Calu3 (cell line): ENCODE measurements at regions of chr3 and their contacts with region 1.

Region 1: GRCh38 chr3:169846458-169847193 is 23.1 kb downstream of the LRRC31 start:
- DNase-seq: no peak
- H3K4me3 Mint-ChIP-seq: no peak overlapping the region
- H3K27ac Mint-ChIP-seq: no peak overlapping the region
- H3K4me1 Mint-ChIP-seq: no peaks in the 10 kb centered on the region
- H3K27me3 Mint-ChIP-seq: no peaks in the 10 kb centered on the region
- CTCF ChIP-seq: no peak

Region 2: GRCh38 chr3:169812332-169813235 is 34.0 kb before region 1 on chr3 and contains the starts of genes LRRC34 and LRRIQ4:
- CTCF ChIA-PET with region 1: no interaction called
- intact Hi-C with region 1: loop called (anchors 1 kb)
- DNase-seq: peak; percentile 63
- H3K4me3 Mint-ChIP-seq: peak within 1 kb of the TSS; percentile 63
- H3K27ac Mint-ChIP-seq: no peak within 1 kb of the TSS
- H3K4me1 Mint-ChIP-seq: no peaks in the 10 kb centered on the region
- H3K27me3 Mint-ChIP-seq: peaks cover 30% of the 10 kb centered on the region
- CTCF ChIP-seq: no peak
- total RNA-seq, gene LRRC34: not detected in 2 replicates
- total RNA-seq, gene LRRIQ4: 0.27 TPM in 1 of 2 replicates, not detected in the other

Region 3: DNA sequence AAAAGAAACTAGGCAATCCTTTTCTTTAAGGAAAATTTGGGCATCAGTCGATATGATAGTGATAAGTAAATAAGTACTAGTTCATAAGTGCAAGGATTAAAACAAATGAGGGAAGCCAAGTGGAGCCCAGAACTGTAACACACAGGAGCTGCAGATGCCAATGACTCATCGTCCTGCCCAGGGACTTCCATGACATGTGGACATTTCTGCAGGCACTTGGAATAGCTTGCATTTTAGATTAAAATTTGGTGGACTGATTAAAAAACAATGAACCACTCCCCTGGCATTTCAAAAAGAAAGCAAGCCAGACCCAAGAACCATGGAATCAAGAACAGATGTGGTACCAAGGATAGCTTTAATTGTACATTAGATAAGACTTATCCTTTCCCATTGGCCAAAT is 67.7 kb after region 1 on chr3:
- CTCF ChIA-PET with region 1: no interaction called
- intact Hi-C with region 1: no loop called
- DNase-seq: peak; percentile 35
- H3K4me3 Mint-ChIP-seq: no peak overlapping the region
- H3K27ac Mint-ChIP-seq: no peak overlapping the region
- H3K4me1 Mint-ChIP-seq: no peaks in the 10 kb centered on the region
- H3K27me3 Mint-ChIP-seq: no peaks in the 10 kb centered on the region
- CTCF ChIP-seq: no peak